GM10248 (cell line): ENCODE measurements at regions of chr1 and their contacts with region 1.

Region 1: GRCh38 chr1:204207136-204207616 is 6.6 kb downstream of the GOLT1A start:
- DNase-seq: peak; percentile 84
- CTCF ChIP-seq: peak; percentile 91

Region 2: DNA sequence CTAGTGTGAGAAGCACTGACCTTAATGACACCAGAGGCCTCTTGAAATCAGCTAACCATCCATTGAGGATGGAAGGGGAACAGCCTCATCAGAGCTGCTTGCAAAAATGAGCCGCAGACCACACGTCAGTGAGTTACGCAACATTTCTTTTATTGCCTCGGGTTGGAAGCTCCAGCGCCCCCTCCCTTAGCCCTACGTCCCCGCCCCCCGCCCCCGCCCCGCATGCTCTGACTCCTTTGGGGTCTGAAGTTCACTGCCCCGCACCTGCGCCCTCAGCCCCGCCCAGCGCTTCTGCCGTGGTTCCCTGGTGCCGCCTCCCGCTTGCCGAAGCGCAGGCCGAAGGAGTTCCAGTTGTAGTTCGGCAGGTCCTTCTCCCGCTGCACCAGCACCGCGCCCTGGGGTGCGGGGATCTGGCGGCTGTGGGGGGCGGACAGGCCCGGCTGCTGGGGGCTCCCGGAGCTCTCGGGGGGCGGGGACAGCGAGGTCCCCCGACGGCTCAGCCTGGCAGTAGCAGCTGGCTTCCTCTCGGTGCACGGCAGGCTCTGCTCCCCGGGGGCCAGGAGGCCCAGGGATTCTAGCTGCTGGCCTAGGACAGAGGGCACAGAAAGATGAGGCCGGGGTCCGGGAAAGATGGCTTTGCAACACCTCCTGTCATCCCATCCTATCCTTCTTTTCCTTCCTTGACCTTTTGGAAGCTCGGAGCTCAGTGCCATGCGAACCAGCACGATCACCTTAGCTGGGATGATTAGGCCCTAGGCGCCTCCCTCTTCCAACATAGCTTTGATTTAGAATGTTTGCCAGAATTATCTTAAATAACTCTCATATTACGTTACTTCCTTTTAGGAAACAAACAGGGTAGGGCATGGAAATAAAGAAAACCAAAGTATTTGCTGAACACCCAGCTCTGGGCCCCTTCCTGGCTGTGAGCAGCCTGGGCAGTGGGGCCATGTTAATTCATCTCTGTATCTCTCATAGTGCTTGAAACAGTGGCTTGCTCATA is 16.7 kb before region 1 on chr1:
- CTCF ChIA-PET with region 1: interaction called, 46 read pairs
- POLR2A ChIA-PET with region 1: no interaction called
- DNase-seq: no peak
- CTCF ChIP-seq: no peak